ENCODE measurements at regions of chr2 and their contacts with region 1.

Region 1: DNA sequence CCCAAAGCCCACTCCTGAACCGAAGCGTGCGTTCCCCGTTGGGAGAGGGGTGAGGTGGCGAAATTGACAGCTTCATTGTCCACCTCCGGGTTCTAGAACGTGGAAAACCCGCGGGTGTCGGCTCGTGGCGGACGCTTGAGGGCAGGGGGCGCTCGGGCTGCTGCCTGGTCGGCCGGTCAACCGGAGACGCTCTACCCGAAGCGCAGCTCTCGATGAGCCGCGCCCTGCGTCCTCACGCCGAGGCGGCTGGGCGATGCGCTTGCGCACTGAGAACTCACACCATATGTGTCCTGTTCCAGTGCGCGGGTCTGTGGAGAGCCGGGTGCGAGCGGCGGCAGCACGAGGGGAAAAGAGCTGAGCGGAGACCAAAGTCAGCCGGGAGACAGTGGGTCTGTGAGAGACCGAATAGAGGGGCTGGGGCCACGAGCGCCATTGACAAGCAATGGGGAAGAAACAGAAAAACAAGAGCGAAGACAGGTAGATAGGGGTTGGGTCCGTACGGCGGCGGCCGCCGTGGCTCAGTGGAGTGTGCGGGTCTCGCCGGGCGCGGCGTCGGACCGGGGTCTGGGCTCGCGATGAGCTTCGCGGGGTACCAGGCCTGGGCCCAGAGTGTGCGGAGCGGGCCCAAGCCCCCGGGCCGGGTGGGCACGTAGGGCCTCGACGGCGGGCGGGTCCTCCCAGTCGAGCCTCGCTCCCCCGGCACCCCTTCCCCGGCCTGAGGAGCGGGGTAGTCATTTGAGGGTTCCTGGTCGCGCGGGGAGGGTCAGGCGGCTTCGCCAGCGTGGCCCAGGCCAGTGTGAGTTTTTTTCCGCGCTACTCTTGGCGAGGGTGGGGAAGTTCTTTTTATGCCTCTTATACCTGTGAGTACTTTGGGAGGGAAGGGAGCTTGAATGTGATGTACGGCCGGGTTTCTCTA is at the start of gene EIF5B:
- DNase-seq: peak; percentile 85 to 97 (median 93)
- ATAC-seq: peak; percentile 62
- H3K4me3 ChIP-seq: peak within 1 kb of the TSS; percentile 76 to 79
- H3K4me3 Mint-ChIP-seq: no peak within 1 kb of the TSS
- H3K27ac ChIP-seq: peak within 1 kb of the TSS; percentile 76 to 89
- H3K27ac Mint-ChIP-seq: no peak within 1 kb of the TSS
- H3K4me1 ChIP-seq: peaks cover 30% of the 10 kb centered on the region
- H3K4me1 Mint-ChIP-seq: peaks cover 42% of the 10 kb centered on the region
- H3K27me3 ChIP-seq: no peaks in the 10 kb centered on the region
- H3K27me3 Mint-ChIP-seq: no peaks in the 10 kb centered on the region
- CTCF ChIP-seq: no peak
- total RNA-seq, gene EIF5B: 29.2 to 30.4 TPM

Region 2: DNA sequence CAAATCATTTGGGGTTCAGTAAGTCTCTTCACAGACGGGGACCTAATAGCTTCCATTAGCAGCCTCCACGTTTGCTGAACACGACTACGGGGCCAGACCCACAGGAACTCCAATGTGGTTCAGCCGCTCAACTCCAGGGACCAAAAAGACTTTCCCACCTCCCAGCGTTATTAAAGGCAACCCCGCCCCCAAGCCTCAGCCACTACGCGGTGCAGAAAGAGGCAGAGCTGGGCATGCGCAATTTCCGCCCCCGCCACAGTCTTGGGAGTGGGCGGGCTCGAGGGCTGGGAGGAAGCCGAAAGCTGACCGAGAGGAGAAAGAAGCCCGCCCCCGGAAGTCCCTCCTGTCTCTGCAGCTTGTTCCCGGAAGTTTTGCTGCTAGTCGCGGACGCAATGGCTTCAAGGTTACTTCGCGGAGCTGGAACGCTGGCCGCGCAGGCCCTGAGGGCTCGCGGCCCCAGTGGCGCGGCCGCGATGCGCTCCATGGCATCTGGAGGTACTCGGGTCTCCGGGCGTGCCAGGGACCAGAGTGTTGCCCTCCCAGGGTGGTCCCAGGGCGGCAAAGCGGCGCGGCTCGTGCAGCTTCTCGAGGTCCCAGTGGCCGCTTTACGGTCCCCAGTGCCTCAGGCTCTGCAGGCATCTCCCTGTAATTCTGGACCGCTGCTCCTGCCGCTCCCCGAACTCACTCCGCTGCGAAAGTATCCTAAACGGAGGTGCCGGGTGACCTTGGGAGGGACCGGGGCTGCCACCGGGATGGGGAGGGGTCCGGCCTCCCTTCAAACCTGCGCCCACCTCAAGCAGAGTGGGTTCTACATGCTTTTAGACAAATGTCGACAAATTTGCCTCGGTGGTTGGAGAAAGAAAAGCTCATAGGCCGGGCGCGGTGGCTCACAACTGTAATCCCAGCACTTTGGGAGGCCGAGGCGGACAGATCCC is 1691.4 kb before region 1 on chr2 and contains the start of gene COX5B:
- CTCF ChIA-PET with region 1: no interaction called
- POLR2A ChIA-PET with region 1: no interaction called
- intact Hi-C with region 1: loop called in 1 of 2 experiments (anchors 5 kb)
- DNase-seq: peak; percentile 97 to 99 (median 99)
- ATAC-seq: peak; percentile 97
- H3K4me3 ChIP-seq: peak within 1 kb of the TSS; percentile 94 to 97
- H3K4me3 Mint-ChIP-seq: peak within 1 kb of the TSS; percentile 91
- H3K27ac ChIP-seq: peak within 1 kb of the TSS; percentile 83 to 90
- H3K27ac Mint-ChIP-seq: peak within 1 kb of the TSS; percentile 95
- H3K4me1 ChIP-seq: peaks cover 20% of the 10 kb centered on the region
- H3K4me1 Mint-ChIP-seq: peaks cover 20% of the 10 kb centered on the region
- H3K27me3 ChIP-seq: no peaks in the 10 kb centered on the region
- H3K27me3 Mint-ChIP-seq: no peaks in the 10 kb centered on the region
- CTCF ChIP-seq: no peak
- total RNA-seq, gene COX5B: 115 to 117 TPM

Region 3: DNA sequence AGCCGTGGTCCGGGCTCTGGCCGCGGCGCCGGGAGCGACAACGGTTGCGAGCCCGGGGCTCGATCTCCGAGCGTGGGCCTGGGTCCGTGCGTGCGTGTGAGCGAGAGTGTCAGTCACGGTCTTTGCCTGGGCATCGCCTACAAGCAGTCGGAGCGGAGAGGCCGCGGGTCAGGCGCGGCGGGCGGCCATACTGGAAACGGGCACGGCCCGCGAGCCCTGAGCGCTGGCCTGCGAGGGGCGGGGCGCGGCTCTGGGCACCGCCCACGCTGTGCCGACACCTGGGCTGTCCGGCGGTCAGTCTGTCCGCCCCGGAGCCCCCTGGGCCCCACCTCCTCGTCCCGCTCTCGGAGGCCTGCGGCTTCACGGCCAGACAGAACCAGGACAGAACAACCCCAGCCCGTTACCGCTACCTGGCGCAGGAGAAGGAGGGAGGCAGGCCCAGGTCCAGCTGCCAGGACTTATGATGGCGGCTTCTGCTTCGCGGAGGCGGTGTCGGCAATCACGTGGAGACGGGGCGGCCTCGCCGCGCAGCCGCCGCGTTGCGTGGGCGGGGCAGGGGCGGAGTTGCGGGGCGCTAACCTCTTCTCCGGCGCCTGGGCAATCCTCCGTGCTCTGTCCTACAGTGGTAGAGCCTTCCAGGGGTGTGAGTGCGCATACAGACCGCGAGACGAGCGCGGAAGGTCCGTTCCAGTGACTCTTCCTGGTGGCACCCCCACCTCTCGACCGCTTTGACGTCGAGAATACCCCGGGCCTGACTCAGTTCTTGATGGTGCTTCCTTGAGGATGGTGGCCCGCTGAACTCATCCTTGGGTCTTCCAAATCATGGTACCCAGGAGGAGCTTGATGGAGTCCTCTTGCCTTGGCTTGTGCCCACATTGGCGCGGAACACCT is 1341.4 kb before region 1 on chr2 and contains the start of gene TMEM131:
- CTCF ChIA-PET with region 1: no interaction called
- POLR2A ChIA-PET with region 1: no interaction called
- intact Hi-C with region 1: loop called in 1 of 2 experiments (anchors 5 kb)
- DNase-seq: peak; percentile 92 to 97 (median 96)
- ATAC-seq: peak; percentile 82
- H3K4me3 ChIP-seq: peak within 1 kb of the TSS; percentile 68 to 95
- H3K4me3 Mint-ChIP-seq: peak within 1 kb of the TSS; percentile 90
- H3K27ac ChIP-seq: peak within 1 kb of the TSS; percentile 82 to 87
- H3K27ac Mint-ChIP-seq: peak within 1 kb of the TSS; percentile 97
- H3K4me1 ChIP-seq: peaks cover 36% of the 10 kb centered on the region
- H3K4me1 Mint-ChIP-seq: peaks cover 43% of the 10 kb centered on the region
- H3K27me3 ChIP-seq: no peaks in the 10 kb centered on the region
- H3K27me3 Mint-ChIP-seq: no peaks in the 10 kb centered on the region
- CTCF ChIP-seq: no peak
- total RNA-seq, gene TMEM131: 26.8 to 31.5 TPM

Region 4: DNA sequence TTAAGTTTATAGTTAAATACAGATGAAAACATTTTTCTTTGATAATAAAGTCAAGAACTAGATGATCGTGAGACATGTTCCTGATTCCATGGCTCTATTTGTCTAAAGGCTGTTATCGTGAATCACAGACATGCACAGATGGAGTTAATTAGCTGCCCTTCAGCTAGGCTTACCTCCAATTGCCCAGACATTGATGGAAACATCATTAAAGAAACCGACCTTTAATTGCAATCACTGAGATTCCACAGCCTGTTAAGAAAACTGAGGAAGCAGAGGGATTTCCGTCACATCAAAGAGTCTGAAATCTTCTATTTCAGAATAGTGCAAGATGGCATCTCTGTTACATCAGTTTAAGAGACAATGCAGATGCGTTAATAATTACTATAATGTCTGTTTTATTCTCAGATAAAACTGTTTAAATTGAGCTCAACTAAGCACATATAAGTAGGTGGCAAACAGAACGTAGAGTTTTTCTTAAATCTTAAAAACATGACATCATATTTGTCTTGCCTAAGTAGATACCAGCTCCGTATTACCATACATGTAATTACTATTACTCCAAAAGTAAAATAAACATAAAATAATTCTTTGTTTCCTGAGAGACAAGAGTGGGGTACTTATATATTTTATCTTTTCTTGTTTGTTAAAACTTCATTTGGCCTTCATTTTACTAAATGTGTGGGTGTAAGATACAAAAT is 377.4 kb before region 1 on chr2:
- CTCF ChIA-PET with region 1: no interaction called
- POLR2A ChIA-PET with region 1: no interaction called
- intact Hi-C with region 1: no loop called
- DNase-seq: no peak
- ATAC-seq: no peak
- H3K4me3 ChIP-seq: no peak overlapping the region
- H3K4me3 Mint-ChIP-seq: no peak overlapping the region
- H3K27ac ChIP-seq: no peak overlapping the region
- H3K27ac Mint-ChIP-seq: no peak overlapping the region
- H3K4me1 ChIP-seq: no peaks in the 10 kb centered on the region
- H3K4me1 Mint-ChIP-seq: no peaks in the 10 kb centered on the region
- H3K27me3 ChIP-seq: no peaks in the 10 kb centered on the region
- H3K27me3 Mint-ChIP-seq: no peaks in the 10 kb centered on the region
- CTCF ChIP-seq: no peak

Region 5: DNA sequence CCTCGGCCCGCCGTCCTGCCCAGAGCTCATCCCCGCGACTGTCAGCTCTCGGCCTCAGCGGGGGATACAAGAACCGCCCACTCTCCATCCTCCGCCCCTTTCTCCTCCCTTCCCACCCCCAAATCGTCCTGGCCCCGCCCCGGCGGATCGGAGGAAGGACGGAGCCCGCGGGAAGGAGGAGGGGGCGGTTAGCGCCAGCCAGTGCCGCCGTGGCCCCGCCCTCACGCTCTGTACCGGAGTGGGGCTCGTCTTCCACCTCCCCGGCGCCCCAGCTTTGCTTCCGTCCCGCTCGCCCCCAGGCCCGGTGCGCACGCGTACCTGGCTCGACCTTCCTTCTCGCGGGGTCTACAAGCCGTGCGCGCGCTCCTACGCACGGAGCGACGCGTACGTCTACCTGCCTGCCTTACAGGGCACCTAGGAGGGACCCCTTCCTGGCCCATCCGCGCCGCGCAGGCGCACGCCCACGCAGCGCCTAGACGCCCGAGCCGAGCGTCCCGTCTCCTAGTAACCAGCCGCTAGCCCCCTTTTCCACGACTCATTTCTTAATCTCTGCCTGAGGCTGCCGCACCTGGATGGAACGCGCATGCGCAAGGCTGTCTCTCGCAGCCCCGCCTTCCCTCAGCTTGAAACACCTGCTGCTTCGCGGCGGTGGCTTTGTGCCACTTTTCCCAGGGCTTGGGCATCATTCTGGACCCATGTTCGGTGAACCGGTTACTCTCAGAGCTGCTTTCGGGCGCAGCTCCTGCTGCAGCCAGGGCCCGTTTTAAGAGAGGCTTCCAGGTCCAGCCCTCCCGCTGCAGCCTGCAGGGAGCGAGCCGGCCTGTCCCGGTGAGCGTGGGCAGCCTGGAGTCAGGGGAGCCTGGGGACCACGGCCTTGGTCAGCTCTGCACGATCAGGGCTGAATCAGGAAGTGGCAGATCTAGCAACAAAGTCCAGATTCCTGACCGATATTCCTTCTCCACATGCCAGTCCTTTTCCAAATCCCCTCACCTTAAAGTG is 196.0 kb before region 1 on chr2 and contains the start of gene C2orf15:
- CTCF ChIA-PET with region 1: no interaction called
- POLR2A ChIA-PET with region 1: interaction called, 8 read pairs
- intact Hi-C with region 1: loop called (anchors 1 kb)
- DNase-seq: peak; percentile 91 to 98 (median 97)
- ATAC-seq: peak; percentile 88
- H3K4me3 ChIP-seq: peak within 1 kb of the TSS; percentile 86 to 97
- H3K4me3 Mint-ChIP-seq: peak within 1 kb of the TSS; percentile 88
- H3K27ac ChIP-seq: peak within 1 kb of the TSS; percentile 90 to 91
- H3K27ac Mint-ChIP-seq: peak within 1 kb of the TSS; percentile 96
- H3K4me1 ChIP-seq: peaks cover 14% of the 10 kb centered on the region
- H3K4me1 Mint-ChIP-seq: peaks cover 25% of the 10 kb centered on the region
- H3K27me3 ChIP-seq: no peaks in the 10 kb centered on the region
- H3K27me3 Mint-ChIP-seq: no peaks in the 10 kb centered on the region
- CTCF ChIP-seq: no peak
- total RNA-seq, gene C2orf15: 1.3 to 1.8 TPM

Region 6: GRCh38 chr2:99365661-99366060 is 28.3 kb after region 1 on chr2:
- CTCF ChIA-PET with region 1: no interaction called
- POLR2A ChIA-PET with region 1: no interaction called
- intact Hi-C with region 1: no loop called
- DNase-seq: no peak
- ATAC-seq: no peak
- H3K4me3 ChIP-seq: no peak overlapping the region
- H3K4me3 Mint-ChIP-seq: no peak overlapping the region
- H3K27ac ChIP-seq: no peak overlapping the region
- H3K27ac Mint-ChIP-seq: no peak overlapping the region
- H3K4me1 ChIP-seq: no peaks in the 10 kb centered on the region
- H3K4me1 Mint-ChIP-seq: no peaks in the 10 kb centered on the region
- H3K27me3 ChIP-seq: no peaks in the 10 kb centered on the region
- H3K27me3 Mint-ChIP-seq: no peaks in the 10 kb centered on the region
- CTCF ChIP-seq: no peak

Region 7: GRCh38 chr2:99410276-99410675 is 72.9 kb after region 1 on chr2:
- CTCF ChIA-PET with region 1: no interaction called
- POLR2A ChIA-PET with region 1: no interaction called
- intact Hi-C with region 1: no loop called
- DNase-seq: no peak
- ATAC-seq: no peak
- H3K4me3 ChIP-seq: no peak overlapping the region
- H3K4me3 Mint-ChIP-seq: no peak overlapping the region
- H3K27ac ChIP-seq: no peak overlapping the region
- H3K27ac Mint-ChIP-seq: no peak overlapping the region
- H3K4me1 ChIP-seq: no peaks in the 10 kb centered on the region
- H3K4me1 Mint-ChIP-seq: no peaks in the 10 kb centered on the region
- H3K27me3 ChIP-seq: no peaks in the 10 kb centered on the region
- H3K27me3 Mint-ChIP-seq: no peaks in the 10 kb centered on the region
- CTCF ChIP-seq: no peak

Region 8: DNA sequence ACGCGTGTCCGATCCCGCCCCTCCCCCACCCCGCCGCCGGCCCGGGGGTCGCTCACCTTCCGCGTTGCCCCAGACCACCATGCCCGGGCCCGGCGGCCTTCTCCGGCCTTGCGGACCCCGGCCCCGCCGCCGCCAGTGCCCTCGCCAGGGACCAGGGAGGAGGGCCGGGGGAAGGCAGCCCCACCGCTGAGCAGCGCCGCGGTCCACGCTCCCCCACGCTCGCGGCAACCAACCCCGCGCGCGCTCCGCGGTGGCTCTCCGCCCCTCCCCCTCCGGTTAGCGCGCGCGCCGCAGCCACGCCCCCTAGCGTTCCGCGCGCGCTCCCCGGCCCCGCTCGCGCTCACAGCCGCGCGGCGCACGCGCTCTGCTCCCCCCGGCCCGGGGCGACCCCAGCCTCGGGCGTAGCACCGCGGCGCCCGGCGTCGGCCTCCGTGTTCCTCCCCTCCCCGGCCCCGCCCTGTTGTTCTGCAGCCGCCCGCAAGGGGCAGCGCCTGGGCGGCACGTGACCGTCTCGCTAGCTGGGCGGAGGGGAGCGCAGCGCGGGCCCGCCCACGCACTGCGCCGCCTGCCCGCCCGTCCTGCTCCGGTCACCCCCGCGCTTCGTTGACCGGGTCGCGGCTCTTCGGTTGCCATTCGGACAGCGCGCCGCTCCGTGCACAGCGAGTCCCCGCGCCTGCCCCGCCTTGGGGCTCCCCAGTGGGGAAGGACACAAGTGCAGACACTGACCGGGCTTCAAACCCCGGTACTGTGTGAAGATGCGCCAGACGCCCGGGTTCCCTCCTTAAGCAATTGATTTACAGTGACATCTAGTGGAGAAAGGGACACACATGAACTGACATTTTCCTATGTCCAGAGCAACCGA is 152.6 kb after region 1 on chr2 and contains the start of gene REV1:
- CTCF ChIA-PET with region 1: interaction called, 4 read pairs
- POLR2A ChIA-PET with region 1: interaction called, 17 read pairs
- intact Hi-C with region 1: loop called (anchors 1 kb)
- DNase-seq: peak; percentile 85 to 97 (median 94)
- ATAC-seq: peak; percentile 88
- H3K4me3 ChIP-seq: peak within 1 kb of the TSS; percentile 87 to 89
- H3K4me3 Mint-ChIP-seq: peak within 1 kb of the TSS; percentile 97
- H3K27ac ChIP-seq: peak within 1 kb of the TSS; percentile 76 to 86
- H3K27ac Mint-ChIP-seq: peak within 1 kb of the TSS; percentile 98
- H3K4me1 ChIP-seq: peaks cover 24% of the 10 kb centered on the region
- H3K4me1 Mint-ChIP-seq: peaks cover 43% of the 10 kb centered on the region
- H3K27me3 ChIP-seq: no peaks in the 10 kb centered on the region
- H3K27me3 Mint-ChIP-seq: no peaks in the 10 kb centered on the region
- CTCF ChIP-seq: peak; percentile 78
- total RNA-seq, gene REV1: 39.3 to 42.3 TPM

Region 9: DNA sequence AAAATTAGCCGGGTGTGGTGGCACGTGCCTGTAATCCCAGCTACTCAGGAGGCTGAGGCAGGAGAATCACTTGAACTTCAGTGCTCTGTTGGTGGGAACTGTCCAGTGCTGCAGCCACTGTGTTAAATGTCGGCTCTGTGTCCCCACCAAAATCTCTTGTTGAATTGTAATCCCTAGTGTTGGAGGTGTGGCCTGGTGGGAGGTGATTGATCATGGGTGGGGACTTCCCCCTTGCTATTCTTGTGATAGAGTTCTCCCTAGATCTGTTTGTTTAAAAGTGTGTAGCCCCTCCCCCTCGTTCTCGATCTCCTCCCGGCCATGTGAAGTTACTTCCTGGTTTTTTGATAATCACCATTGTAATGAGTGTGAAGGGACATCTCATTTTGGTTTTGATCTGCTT is 1654.9 kb after region 1 on chr2:
- CTCF ChIA-PET with region 1: no interaction called
- POLR2A ChIA-PET with region 1: no interaction called
- intact Hi-C with region 1: loop called in 1 of 2 experiments (anchors 10 kb)
- DNase-seq: no peak
- ATAC-seq: no peak
- H3K4me3 ChIP-seq: no peak overlapping the region
- H3K4me3 Mint-ChIP-seq: no peak overlapping the region
- H3K27ac ChIP-seq: no peak overlapping the region
- H3K27ac Mint-ChIP-seq: no peak overlapping the region
- H3K4me1 ChIP-seq: no peaks in the 10 kb centered on the region
- H3K4me1 Mint-ChIP-seq: no peaks in the 10 kb centered on the region
- H3K27me3 ChIP-seq: no peaks in the 10 kb centered on the region
- H3K27me3 Mint-ChIP-seq: no peaks in the 10 kb centered on the region
- CTCF ChIP-seq: no peak

Measured in CD8-positive, alpha-beta T cell (primary cell).